Mammary epithelial cell (primary cell): ENCODE measurements at regions of chr17 and their contacts with region 1.

Region 1: DNA sequence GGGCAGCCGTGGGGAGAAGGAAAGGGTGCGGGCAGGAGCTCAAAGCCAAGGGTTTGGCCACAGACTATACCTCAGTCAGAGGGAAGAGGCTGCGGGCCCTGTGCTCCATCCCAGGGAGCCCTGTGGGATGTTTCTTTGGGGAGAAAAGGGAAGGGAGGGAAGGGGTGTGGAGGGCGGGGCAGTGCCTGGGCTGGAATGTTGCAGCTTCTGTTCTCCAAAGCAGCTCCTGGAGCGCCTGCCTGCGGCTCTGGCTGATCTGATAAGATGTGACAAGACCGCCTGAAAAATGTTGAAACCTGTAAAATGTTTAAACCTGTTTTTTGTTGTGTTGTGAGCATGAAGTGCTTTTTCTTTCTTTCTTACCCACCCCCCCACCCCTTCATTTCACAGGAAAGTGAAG is 32.8 kb downstream of the WNT3 start:
- DNase-seq: no peak
- H3K4me3 ChIP-seq: no peak overlapping the region
- H3K27ac ChIP-seq: no peak overlapping the region
- H3K4me1 ChIP-seq: no peaks in the 10 kb centered on the region
- H3K27me3 ChIP-seq: no peaks in the 10 kb centered on the region
- CTCF ChIP-seq: no peak

Region 2: DNA sequence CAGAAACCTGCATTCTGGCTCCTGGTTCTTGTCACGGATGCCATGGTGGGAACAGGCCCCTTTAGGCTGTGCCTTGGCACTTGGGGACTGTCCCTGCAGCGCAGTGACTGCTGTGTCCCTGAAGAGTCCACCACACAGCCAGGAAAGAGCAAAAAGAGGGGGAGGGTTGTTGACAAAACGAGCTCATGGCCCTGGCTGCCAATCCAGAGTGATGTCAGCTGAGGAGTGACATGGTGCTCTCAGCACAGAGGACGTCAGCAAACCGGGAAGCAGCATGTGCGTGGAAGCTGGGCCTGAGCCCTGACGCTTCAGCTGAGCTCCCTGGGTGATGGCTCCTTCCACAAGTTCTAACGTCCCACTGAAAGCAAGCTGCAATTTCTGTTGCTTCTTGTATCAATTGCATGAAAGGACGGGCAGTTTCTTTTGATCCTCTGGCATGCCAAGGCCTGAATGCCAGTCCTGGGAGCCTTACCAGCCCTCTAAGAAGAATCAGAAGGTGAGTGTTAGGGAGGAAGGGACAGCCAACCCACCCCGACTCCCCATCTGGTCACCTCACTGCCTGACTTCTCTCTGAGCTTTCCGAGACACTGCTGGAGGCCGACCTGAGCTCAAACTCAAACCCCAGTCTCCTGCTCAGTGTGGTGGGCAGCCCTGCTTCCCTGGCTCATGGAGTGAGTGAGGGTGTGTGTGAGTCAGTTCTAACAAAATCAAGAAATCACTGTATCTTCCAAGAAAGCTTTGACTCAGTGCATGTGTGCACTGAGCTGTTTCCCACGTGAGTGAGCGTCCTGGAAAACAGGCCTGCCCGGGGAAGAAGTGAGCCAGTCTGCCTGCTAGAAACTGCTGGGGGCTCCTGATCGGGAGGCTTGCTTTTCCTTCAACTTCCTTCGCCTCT is 47.5 kb after region 1 on chr17:
- CTCF ChIA-PET with region 1: no interaction called
- dilution Hi-C with region 1: loop called (anchors 5 kb)
- in situ Hi-C with region 1: no loop called
- intact Hi-C with region 1: loop called (anchors 5 kb)
- DNase-seq: no peak
- H3K4me3 ChIP-seq: no peak overlapping the region
- H3K27ac ChIP-seq: no peak overlapping the region
- H3K4me1 ChIP-seq: no peaks in the 10 kb centered on the region
- H3K27me3 ChIP-seq: peaks cover 1% of the 10 kb centered on the region
- CTCF ChIP-seq: no peak

Region 3: GRCh38 chr17:46851029-46851741 is 65.5 kb after region 1 on chr17 and contains the start of gene WNT9B:
- CTCF ChIA-PET with region 1: no interaction called
- dilution Hi-C with region 1: no loop called
- in situ Hi-C with region 1: no loop called
- intact Hi-C with region 1: no loop called
- DNase-seq: peak; percentile 23
- H3K4me3 ChIP-seq: peak within 1 kb of the TSS in 2 of 3 experiments; percentile 35 to 39
- H3K27ac ChIP-seq: no peak within 1 kb of the TSS
- H3K4me1 ChIP-seq: peaks cover 10% of the 10 kb centered on the region
- H3K27me3 ChIP-seq: peaks cover 19% of the 10 kb centered on the region
- CTCF ChIP-seq: no peak
- total RNA-seq, gene WNT9B: not detected